B cell (primary cell): ENCODE measurements at regions of chr7 and their contacts with region 1.

Region 1: DNA sequence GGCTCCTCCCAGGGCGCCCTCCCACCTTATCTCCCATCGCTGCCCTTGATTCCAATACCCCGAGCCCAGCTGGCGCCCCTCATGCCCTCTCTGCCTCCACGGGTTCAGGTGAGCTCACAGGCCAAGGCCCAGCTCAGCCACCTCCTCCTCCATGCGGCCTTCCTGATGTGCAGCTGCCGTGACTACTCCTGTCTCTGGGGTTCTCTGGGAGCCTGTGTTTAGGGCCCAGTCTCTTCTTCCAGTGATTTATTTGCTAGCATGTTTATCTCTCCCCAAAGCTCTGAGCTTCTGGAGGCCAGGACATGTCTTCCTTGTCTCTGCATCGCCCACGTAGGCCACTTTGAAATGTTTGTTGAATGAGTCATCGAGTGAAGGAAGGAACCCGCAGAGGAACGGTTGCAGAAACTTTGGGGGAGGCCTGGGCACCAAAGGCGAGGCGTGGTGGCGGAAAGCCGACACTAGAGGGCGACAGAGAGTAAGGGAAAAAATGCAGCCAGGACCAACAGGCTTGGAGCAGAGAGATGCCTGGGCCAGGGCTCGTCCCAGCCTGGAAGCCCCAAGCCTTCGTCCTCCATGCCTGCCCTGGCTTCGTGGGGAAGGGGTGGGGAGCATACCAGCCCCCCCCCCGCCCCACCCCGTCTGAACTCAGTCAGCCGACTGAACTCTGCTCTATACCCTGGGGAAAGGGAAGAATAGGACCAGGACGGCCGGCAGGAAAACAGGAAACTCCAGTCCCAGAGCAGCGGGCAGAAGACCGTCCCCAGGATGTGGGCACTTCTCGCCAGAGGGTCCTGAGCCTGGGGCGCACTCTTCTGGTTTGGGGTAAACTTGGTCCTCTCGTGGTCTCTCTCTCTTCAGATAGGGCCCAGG is 10.9 kb upstream of the HSPB1 start:
- DNase-seq: peak; percentile 85
- ATAC-seq: peak; percentile 77
- H3K4me3 ChIP-seq: no peak overlapping the region
- H3K4me3 Mint-ChIP-seq: no peak overlapping the region
- H3K27ac ChIP-seq: no peak overlapping the region
- H3K27ac Mint-ChIP-seq: no peak overlapping the region
- H3K4me1 ChIP-seq: peaks cover 0 to 16% of the 10 kb centered on the region in 2 donors
- H3K4me1 Mint-ChIP-seq: peaks cover 11% of the 10 kb centered on the region
- H3K27me3 ChIP-seq: peaks cover 0 to 12% (median 2%) of the 10 kb centered on the region in 4 experiments
- H3K27me3 Mint-ChIP-seq: peaks cover 10% of the 10 kb centered on the region
- CTCF ChIP-seq: peak; percentile 98

Region 2: DNA sequence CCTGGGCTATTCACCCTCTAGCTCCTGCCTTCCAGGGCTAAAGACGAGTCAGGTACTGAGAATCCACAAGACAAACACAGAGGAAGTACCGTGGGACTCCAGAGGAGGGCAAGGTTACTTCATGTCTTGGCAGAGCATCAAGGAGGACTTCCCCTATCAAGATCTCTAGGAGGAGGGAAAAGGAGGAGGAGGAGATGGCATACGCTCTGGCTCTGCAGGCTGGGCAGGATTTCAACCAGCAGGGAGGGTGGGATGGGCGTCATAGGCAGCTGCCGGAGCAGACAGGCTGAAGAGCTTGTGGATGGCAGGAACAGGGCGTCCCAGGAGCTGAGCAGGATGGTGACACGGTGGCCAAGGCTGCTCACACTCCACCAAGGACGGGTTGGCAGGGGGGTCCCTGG is 222.3 kb before region 1 on chr7:
- CTCF ChIA-PET with region 1: no interaction called
- POLR2A ChIA-PET with region 1: interaction called, 14 read pairs
- intact Hi-C with region 1: no loop called
- DNase-seq: no peak
- ATAC-seq: no peak
- H3K4me3 ChIP-seq: no peak overlapping the region
- H3K4me3 Mint-ChIP-seq: no peak overlapping the region
- H3K27ac ChIP-seq: no peak overlapping the region
- H3K27ac Mint-ChIP-seq: no peak overlapping the region
- H3K4me1 ChIP-seq: no peaks in the 10 kb centered on the region
- H3K4me1 Mint-ChIP-seq: no peaks in the 10 kb centered on the region
- H3K27me3 ChIP-seq: no peaks in the 10 kb centered on the region
- H3K27me3 Mint-ChIP-seq: no peaks in the 10 kb centered on the region
- CTCF ChIP-seq: no peak

Region 3: GRCh38 chr7:76142861-76143260 is 148.7 kb before region 1 on chr7:
- CTCF ChIA-PET with region 1: no interaction called
- POLR2A ChIA-PET with region 1: no interaction called
- intact Hi-C with region 1: no loop called
- DNase-seq: no peak
- ATAC-seq: no peak
- H3K4me3 ChIP-seq: no peak overlapping the region
- H3K4me3 Mint-ChIP-seq: no peak overlapping the region
- H3K27ac ChIP-seq: no peak overlapping the region
- H3K27ac Mint-ChIP-seq: no peak overlapping the region
- H3K4me1 ChIP-seq: no peaks in the 10 kb centered on the region
- H3K4me1 Mint-ChIP-seq: no peaks in the 10 kb centered on the region
- H3K27me3 ChIP-seq: no peaks in the 10 kb centered on the region
- H3K27me3 Mint-ChIP-seq: peaks cover 9% of the 10 kb centered on the region
- CTCF ChIP-seq: no peak

Region 4: DNA sequence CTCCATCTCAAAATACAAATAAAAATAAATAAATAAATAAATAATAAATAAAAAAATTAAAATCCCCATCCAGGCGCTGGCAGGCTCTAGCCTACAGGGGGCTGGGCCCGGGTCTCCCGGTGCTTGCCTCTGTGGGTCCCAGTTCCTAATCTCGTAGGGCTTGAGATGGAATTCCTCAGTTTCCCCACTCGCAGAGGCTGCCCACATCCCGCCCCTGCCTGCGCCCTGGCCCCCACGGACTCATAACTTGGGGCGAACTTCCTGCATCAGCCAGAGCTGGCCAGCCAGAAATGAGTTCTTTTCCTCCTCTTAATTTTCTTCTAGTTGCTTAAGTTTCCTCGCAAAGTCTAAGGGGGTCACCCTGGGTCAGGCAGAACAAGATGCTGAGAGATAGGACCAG is 111.9 kb before region 1 on chr7:
- CTCF ChIA-PET with region 1: interaction called, 11 read pairs
- POLR2A ChIA-PET with region 1: no interaction called
- intact Hi-C with region 1: loop called (anchors 1 kb)
- DNase-seq: no peak
- ATAC-seq: no peak
- H3K4me3 ChIP-seq: no peak overlapping the region
- H3K4me3 Mint-ChIP-seq: no peak overlapping the region
- H3K27ac ChIP-seq: no peak overlapping the region
- H3K27ac Mint-ChIP-seq: no peak overlapping the region
- H3K4me1 ChIP-seq: peaks cover 0 to 6% of the 10 kb centered on the region in 2 donors
- H3K4me1 Mint-ChIP-seq: peaks cover 3% of the 10 kb centered on the region
- H3K27me3 ChIP-seq: no peaks in the 10 kb centered on the region
- H3K27me3 Mint-ChIP-seq: peaks cover 4% of the 10 kb centered on the region
- CTCF ChIP-seq: no peak

Region 5: GRCh38 chr7:76234931-76235441 is 56.6 kb before region 1 on chr7:
- CTCF ChIA-PET with region 1: no interaction called
- POLR2A ChIA-PET with region 1: no interaction called
- intact Hi-C with region 1: no loop called
- DNase-seq: peak; percentile 66
- ATAC-seq: peak; percentile 82
- H3K4me3 ChIP-seq: peak overlapping the region in 3 of 5 experiments; percentile 36 to 44 (median 42)
- H3K4me3 Mint-ChIP-seq: peak overlapping the region; percentile 78
- H3K27ac ChIP-seq: no peak overlapping the region
- H3K27ac Mint-ChIP-seq: no peak overlapping the region
- H3K4me1 ChIP-seq: peaks cover 3 to 8% of the 10 kb centered on the region in 2 donors
- H3K4me1 Mint-ChIP-seq: peaks cover 7% of the 10 kb centered on the region
- H3K27me3 ChIP-seq: peaks cover 0 to 37% (median 12%) of the 10 kb centered on the region in 4 experiments
- H3K27me3 Mint-ChIP-seq: peaks cover 63% of the 10 kb centered on the region
- CTCF ChIP-seq: no peak

Region 6: DNA sequence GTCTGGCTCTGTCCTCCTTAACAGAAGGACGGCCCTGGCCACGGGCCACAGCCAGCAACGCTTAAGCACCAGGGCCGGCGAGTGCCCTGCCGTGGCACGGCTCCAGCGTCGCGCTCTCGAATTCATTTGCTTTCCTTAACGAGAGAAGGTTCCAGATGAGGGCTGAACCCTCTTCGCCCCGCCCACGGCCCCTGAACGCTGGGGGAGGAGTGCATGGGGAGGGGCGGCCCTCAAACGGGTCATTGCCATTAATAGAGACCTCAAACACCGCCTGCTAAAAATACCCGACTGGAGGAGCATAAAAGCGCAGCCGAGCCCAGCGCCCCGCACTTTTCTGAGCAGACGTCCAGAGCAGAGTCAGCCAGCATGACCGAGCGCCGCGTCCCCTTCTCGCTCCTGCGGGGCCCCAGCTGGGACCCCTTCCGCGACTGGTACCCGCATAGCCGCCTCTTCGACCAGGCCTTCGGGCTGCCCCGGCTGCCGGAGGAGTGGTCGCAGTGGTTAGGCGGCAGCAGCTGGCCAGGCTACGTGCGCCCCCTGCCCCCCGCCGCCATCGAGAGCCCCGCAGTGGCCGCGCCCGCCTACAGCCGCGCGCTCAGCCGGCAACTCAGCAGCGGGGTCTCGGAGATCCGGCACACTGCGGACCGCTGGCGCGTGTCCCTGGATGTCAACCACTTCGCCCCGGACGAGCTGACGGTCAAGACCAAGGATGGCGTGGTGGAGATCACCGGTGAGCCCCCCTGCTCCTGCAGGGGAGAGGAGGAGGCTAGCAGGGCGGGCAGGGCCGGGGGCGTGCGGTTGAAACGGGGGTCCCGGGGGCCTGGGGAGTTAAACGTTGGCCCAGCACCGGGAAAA is 11.0 kb after region 1 on chr7 and contains the start of gene HSPB1:
- CTCF ChIA-PET with region 1: interaction called, 31 read pairs
- POLR2A ChIA-PET with region 1: interaction called, 4 read pairs
- intact Hi-C with region 1: loop called (anchors 1 kb)
- DNase-seq: peak; percentile 81
- ATAC-seq: peak; percentile 75
- H3K4me3 ChIP-seq: peak within 1 kb of the TSS; percentile 38 to 73 (median 66)
- H3K4me3 Mint-ChIP-seq: peak within 1 kb of the TSS; percentile 94
- H3K27ac ChIP-seq: peak within 1 kb of the TSS; percentile 52 to 65
- H3K27ac Mint-ChIP-seq: peak within 1 kb of the TSS; percentile 93
- H3K4me1 ChIP-seq: peaks cover 10 to 21% of the 10 kb centered on the region in 2 donors
- H3K4me1 Mint-ChIP-seq: peaks cover 15% of the 10 kb centered on the region
- H3K27me3 ChIP-seq: no peaks in the 10 kb centered on the region
- H3K27me3 Mint-ChIP-seq: no peaks in the 10 kb centered on the region
- CTCF ChIP-seq: no peak
- total RNA-seq, gene HSPB1: 26.8 and 34.0 TPM in 2 replicates